Heart left ventricle (tissue), 16 donors: ENCODE measurements at regions of chr12 and their contacts with region 1.

Region 1: DNA sequence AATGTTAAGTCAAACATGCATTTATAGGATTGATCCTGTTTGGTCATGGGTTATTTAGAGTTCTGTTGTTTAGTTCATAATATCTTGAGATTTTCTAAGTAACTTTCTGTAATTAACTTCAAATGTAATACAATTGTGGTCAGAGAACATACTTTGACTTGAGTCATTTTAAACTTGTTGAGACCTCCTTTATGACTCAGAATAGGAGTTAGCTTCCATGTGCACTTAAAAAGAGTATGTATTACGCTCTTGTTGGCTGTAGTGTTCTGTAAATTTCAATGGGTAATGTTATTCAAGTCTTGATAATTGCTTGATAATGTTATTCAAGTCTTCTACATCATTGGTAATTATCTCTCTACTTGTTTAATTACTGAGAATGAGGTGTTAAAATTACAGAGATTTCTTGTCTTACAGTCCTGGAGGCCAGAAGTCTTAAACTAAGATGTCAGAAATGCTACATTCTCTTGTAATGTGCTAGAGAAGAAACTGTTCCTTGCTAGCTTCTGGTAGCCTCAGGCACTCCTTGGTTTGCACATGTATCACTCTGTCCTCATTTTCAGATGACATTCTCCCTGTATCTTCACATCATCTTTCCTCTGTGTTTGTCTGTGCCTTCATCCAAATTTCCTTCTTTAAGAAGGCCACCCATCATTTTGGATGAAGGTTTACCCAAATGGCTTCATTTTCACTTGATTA is 197.3 kb downstream of the TMTC3 start:
- DNase-seq: no peak
- ATAC-seq: no peak
- H3K4me3 ChIP-seq: no peak overlapping the region
- H3K27ac ChIP-seq: no peak overlapping the region
- H3K4me1 ChIP-seq: no peaks in the 10 kb centered on the region
- H3K27me3 ChIP-seq: no peaks in the 10 kb centered on the region
- CTCF ChIP-seq: no peak
- POLR2A ChIP-seq: no peak

Region 2: DNA sequence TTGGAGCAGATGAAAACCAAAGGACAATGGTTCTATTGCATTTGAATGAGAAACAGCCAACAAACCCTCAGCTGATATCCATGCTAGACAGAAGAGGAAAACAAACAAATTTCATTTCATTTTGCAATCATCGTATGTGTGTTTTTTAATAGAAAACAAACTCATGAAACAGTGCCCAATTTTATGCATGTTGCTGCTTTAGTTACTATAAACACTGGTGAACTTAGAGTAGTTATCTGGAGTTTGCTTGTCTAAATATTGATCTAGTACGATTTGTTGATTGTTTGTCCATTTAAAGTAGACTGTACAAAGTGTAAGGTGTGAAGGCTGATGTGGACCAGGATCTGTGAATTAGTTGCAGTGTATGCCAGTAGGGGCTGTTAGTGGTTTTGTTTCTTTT is 74.2 kb after region 1 on chr12:
- intact Hi-C with region 1: loop called in 1 of 10 experiments (anchors 5 kb)
- DNase-seq: no peak
- ATAC-seq: no peak
- H3K4me3 ChIP-seq: no peak overlapping the region
- H3K27ac ChIP-seq: no peak overlapping the region
- H3K4me1 ChIP-seq: peaks cover 0 to 3% (median 0%) of the 10 kb centered on the region in 12 donors
- H3K27me3 ChIP-seq: no peaks in the 10 kb centered on the region
- CTCF ChIP-seq: no peak
- POLR2A ChIP-seq: no peak